ENCODE measurements at regions of chr4 and their contacts with region 1.

Region 1: DNA sequence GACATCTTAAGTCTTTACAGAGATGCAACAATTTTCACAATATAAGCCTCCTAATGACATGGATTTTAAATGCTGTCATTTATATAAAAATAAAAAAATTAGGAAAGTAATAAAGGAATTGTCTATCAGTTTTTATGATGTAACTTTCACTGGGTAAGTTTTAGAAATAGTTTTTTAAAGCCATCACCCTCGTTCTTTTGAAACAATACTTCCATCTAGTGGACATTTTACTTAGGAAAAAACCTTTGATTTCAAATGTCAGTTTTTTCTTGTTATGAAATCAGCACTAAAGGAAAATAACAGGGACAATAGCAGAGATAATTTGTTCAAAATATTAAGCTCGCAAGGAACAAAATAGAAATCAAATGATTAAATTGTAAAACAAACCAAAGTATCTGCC is 24.3 kb upstream of the NDNF start:
- DNase-seq: no peak
- ATAC-seq: no peak

Region 2: DNA sequence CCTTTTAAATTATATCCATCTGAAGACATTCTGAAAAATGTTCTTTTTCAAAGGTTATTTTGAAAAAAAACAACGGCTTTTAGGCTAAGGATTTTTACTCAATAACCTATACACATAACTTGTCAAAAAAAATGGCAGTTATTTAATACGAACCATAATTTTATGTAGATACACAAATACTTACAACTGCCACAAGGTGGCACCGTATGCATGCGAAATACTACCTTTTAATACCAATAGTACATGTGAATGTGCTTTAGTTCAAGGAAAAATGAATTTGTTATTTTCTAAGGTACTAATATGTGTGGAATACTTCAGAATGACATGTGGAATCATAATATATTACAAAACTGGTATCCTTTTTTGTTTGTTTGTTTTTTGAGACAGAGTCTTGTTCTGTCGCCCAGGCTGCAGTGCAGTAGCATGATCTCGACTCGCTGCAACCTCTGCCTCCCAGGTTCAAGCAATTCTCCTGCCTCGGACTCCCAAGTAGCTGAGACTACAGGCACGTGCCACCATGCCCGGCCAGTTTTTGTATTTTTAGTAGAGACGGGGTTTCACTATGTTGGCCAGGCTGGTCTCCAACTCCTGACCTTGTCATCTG is 1025.3 kb before region 1 on chr4:
- intact Hi-C with region 1: loop called (anchors 10 kb)
- DNase-seq: no peak
- ATAC-seq: no peak

Region 3: GRCh38 chr4:120156120-120156718 is 940.4 kb before region 1 on chr4:
- intact Hi-C with region 1: loop called (anchors 2 kb)
- DNase-seq: no peak
- ATAC-seq: no peak

Region 4: DNA sequence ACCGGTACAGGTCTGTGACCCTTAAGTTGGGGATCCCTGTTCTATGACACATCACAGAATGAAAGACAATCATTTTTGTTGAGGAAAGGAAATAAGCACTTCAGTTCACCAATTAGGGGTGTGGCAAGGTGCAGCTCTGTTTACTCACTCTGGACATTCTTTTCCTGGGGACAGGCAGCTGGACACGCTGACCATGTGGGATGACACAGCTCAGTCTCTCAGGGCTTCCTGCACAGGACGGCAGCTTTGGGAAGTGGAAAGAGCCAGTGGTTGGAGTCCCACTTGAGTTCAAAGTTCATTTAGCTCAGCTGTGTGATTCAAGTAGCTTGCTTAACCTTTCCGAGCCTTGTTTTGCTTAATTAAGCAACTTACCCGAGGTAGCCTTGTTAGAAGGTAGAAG is 80.0 kb before region 1 on chr4:
- intact Hi-C with region 1: loop called (anchors 5 kb)
- DNase-seq: no peak
- ATAC-seq: no peak

Region 5: GRCh38 chr4:121112530-121112929 is 15.9 kb after region 1 on chr4:
- intact Hi-C with region 1: no loop called
- DNase-seq: no peak
- ATAC-seq: no peak

Region 6: DNA sequence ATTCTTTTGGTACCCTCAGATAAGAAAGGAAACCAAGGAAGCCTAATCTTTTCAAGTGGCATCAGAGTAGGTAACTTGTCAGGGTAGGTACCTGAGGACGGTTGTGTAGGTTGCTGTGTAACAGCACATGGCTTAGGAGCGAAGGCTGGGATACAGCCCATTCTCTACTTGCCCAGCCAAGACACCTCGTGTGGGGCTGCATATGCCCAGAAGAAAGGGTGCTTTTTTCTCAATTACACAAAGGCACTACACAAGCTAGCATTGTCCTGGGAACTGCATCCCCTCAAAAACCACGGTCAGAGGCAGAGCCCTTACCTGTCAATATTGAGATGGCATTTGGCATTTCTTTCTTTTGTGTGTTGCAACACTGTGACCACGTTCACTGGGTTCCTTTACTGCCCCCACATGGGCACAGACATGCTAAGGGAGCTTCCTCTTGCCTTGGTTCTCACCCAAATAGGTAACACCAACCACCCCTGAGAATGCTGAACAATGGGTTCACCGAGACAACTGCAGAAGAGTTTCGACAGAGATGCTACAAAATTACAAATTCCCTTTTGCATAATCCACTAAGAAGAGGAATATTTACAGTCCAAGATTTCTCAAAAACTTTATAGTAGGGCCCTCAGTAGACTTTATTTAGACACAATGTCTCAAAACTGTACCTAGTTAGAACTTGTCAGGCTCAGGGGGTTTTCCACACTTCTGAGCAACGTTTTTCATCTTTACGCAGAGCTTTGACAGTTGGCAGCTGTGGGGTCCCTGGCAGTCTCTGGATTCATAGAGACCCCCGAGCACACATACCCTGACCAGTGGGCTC is 103.3 kb after region 1 on chr4:
- intact Hi-C with region 1: no loop called
- DNase-seq: peak; percentile 52
- ATAC-seq: no peak